Breast epithelium (tissue), 4 donors: ENCODE measurements at regions of chr14 and their contacts with region 1.

Region 1: DNA sequence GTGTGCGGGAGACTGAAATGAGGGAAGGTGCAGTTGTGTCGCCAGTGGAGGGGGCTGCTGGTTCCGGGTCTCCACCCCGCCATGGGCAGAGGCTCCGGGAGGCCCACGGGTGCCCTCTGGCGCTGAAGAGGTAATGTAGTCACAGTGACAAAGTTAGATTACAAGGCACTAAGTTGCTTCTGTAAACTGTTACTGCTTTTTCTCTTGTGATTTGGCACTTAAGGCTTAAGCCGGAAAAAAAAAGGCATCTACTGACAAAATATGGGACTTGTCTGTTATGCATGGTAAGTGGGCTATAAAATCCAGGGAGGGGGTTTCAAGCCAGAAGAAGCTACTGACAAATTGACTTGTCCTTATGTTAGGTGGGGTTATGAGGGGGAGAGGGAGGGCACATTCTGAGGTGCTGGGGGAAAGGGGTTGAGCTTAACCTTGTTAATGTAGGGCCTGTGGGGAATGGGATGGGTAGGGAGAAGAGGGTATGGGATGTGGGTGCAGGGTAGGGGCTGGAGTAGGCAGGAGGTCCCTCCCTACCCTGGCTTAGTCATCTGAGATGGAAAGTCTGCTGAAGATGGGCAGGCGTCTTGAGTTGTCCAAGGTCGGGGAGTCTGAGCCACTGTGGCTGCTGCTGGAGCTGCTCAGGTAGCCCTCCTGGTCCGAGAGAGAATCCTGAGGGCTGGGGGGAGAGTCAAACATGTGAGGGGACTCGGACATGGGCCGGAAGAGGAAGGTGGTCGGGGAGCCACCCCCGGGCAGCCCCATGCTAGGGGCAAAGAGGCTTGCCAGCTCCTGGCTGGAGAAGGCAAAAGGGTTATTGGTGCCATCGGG is 3.7 kb downstream of the ZFP36L1 start:
- DNase-seq: peak; percentile 78 to 82
- H3K4me3 ChIP-seq: peak overlapping the region; percentile 80 to 95 (median 94)
- H3K27ac ChIP-seq: peak overlapping the region; percentile 98 to 100
- H3K4me1 ChIP-seq: peaks cover 0 to 3% of the 10 kb centered on the region in 2 donors
- H3K27me3 ChIP-seq: no peaks in the 10 kb centered on the region
- CTCF ChIP-seq: peak; percentile 49 to 58 (median 56)
- POLR2A ChIP-seq: no peak

Region 2: GRCh38 chr14:68164711-68165113 is 624.5 kb before region 1 on chr14:
- intact Hi-C with region 1: loop called (anchors 5 kb)
- DNase-seq: no peak
- H3K4me3 ChIP-seq: no peak overlapping the region
- H3K27ac ChIP-seq: peak overlapping the region; percentile 73 to 83
- H3K4me1 ChIP-seq: peaks cover 0 to 3% of the 10 kb centered on the region in 2 donors
- H3K27me3 ChIP-seq: no peaks in the 10 kb centered on the region
- CTCF ChIP-seq: no peak
- POLR2A ChIP-seq: no peak

Region 3: DNA sequence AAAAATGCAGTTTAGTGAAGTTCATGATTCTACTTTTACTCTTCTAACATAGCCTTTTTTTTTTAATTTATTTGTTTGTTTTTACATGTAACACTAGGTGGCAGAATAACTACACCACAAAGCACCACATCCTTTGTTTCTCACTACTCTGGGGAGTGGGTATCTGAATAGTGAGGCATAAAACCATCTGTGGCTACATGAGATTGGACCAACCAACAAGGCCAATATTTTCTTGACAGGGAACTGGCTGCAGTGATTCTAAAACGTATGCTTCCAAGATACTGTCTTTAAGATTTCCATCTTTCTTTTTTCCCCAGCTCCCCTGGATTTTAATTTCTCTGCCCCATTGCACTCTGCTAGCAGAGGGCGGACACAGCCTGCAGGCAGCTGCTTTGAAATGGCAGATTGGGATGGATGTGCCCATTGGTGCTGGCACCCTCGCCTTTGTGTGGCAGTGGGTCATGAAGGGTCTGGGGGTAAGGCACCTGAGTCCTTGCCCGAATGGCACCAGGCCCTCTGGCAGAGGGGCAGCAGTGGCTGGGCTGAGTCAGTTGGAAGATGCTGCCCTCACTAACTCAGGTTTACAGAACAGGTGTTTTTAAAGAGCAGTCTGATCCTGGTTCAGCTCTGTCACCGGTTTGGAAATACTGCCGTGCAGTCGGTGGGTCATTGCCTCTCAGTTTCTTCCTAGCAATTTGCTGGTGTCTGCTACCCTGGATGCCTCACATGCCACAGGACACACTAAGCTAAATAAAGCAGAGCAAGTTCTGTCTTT is 540.5 kb before region 1 on chr14:
- intact Hi-C with region 1: loop called (anchors 5 kb)
- DNase-seq: no peak
- H3K4me3 ChIP-seq: no peak overlapping the region
- H3K27ac ChIP-seq: peak overlapping the region; percentile 90 to 92
- H3K4me1 ChIP-seq: peaks cover 11 to 59% of the 10 kb centered on the region in 2 donors
- H3K27me3 ChIP-seq: no peaks in the 10 kb centered on the region
- CTCF ChIP-seq: peak; percentile 57 to 75 (median 70)
- POLR2A ChIP-seq: no peak

Region 4: DNA sequence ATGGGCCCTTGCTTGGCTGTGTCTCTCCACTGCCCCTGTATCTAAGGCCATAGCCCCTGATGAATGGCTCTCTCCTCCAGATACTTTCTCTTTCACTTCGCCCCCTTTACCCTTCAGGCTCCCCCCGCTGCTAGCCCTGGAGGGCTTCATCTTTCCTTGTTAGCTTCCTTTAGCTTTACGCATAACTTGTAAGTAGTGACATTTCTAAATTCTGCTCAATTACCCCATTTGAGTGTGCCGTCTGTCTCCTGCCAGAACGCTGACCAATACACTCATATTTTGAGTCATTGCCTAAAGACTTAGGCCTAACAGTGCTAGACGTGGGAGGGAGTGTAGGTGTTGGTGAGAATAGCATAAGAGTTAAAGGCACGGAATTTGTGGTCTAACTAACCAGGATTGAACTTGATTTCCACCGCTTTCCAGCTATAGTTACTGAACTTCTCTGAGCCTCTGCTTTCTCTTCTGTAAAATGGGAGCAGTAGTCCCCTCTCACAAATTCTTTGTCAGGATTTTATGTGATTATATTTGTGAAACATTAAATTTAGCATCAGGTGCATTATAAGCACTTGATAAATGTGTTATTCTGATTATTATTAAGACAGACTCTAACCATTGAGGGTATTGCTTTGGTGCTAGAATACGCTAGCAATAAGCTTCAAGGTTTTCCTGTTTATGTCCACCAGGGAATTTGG is 125.7 kb before region 1 on chr14:
- intact Hi-C with region 1: no loop called
- DNase-seq: no peak
- H3K4me3 ChIP-seq: peak overlapping the region in 1 of 3 donors; percentile 13
- H3K27ac ChIP-seq: peak overlapping the region; percentile 78 to 79
- H3K4me1 ChIP-seq: peaks cover 0 to 28% of the 10 kb centered on the region in 2 donors
- H3K27me3 ChIP-seq: no peaks in the 10 kb centered on the region
- CTCF ChIP-seq: no peak
- POLR2A ChIP-seq: no peak

Region 5: DNA sequence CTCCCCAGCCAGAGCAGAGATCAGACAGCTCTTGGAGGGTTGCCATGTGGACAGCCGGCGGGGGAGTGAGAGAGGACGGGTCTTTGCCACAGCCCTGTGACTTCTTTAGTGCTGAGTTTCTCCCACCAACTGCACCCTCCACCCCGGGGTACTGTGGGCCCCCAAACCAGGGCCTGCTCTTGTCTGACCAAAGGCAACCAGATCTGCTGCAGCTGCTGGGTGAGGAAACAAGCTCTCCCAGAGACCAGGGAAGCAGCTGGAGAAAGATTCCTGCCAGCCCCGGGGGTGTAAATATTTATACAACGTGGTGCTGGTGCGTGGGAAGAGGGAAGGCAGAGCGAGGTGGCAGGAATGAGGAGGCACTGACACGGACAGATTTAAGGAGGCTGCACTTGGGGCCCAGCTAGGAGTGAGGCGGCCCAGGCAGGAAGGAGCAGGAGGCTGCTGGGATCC is 18.0 kb after region 1 on chr14:
- intact Hi-C with region 1: loop called (anchors 1 kb)
- DNase-seq: peak in 1 of 2 donors; percentile 57
- H3K4me3 ChIP-seq: no peak overlapping the region
- H3K27ac ChIP-seq: peak overlapping the region; percentile 83 to 85
- H3K4me1 ChIP-seq: peaks cover 12 to 15% of the 10 kb centered on the region in 2 donors
- H3K27me3 ChIP-seq: no peaks in the 10 kb centered on the region
- CTCF ChIP-seq: no peak
- POLR2A ChIP-seq: no peak